Activated CD4-positive, alpha-beta T cell treated with anti-CD3 and anti-CD28 coated beads for 36 hours (primary cell): ENCODE measurements at regions of chr3 and their contacts with region 1.

Region 1: DNA sequence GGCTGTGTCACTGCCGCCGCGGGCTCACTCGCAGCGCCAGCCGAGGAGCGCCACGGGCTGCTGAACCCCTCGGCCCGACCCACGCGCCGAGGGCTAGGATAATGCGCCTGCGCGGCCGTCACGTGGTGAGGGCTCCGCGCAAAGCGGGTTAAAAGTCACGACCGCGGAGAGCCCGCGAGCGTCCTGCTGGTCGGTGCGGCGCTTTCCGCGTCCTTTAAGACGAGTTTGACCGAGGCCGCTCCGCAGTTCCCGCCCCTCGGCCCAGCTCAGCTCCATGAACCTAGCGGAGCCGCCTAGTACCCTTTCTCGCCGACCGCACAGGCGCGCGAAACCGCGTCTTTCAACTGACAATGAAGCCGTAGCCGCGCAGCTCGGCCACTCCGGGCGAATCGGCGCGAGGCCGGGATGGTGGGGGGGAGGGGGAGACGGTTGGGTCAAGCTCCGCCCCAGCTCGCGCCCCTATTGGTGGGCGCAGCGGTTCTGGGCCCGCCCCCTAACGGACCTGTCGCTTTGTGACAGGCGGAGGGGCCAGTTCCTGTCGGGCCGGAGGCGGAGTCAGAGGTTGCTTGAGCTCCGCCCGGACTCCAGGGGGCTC is 636 bp upstream of the STT3B start:
- DNase-seq: peak; percentile 99
- ATAC-seq: peak; percentile 88
- H3K4me3 Mint-ChIP-seq: no peak overlapping the region
- H3K27ac Mint-ChIP-seq: peak overlapping the region; percentile 99
- H3K4me1 Mint-ChIP-seq: peaks cover 12% of the 10 kb centered on the region
- H3K27me3 Mint-ChIP-seq: no peaks in the 10 kb centered on the region

Region 2: GRCh38 chr3:30606301-30607031 is 925.6 kb before region 1 on chr3 and contains the start of gene TGFBR2:
- CTCF ChIA-PET with region 1: no interaction called
- POLR2A ChIA-PET with region 1: no interaction called
- intact Hi-C with region 1: loop called in 1 of 2 experiments (anchors 2 kb)
- DNase-seq: peak; percentile 94
- ATAC-seq: peak; percentile 70
- H3K4me3 Mint-ChIP-seq: peak within 1 kb of the TSS; percentile 99
- H3K27ac Mint-ChIP-seq: peak within 1 kb of the TSS; percentile 95
- H3K4me1 Mint-ChIP-seq: peaks cover 60% of the 10 kb centered on the region
- H3K27me3 Mint-ChIP-seq: no peaks in the 10 kb centered on the region
- total RNA-seq, gene TGFBR2: 45.5 to 46.6 TPM

Region 3: GRCh38 chr3:31077021-31077601 is 455.0 kb before region 1 on chr3:
- CTCF ChIA-PET with region 1: no interaction called
- POLR2A ChIA-PET with region 1: interaction called, 7 read pairs
- intact Hi-C with region 1: loop called in 1 of 2 experiments (anchors 1 kb)
- DNase-seq: peak; percentile 68
- ATAC-seq: peak; percentile 98
- H3K4me3 Mint-ChIP-seq: no peak overlapping the region
- H3K27ac Mint-ChIP-seq: peak overlapping the region; percentile 52
- H3K4me1 Mint-ChIP-seq: peaks cover 26% of the 10 kb centered on the region
- H3K27me3 Mint-ChIP-seq: peaks cover 5% of the 10 kb centered on the region

Region 4: GRCh38 chr3:31253782-31254181 is 278.3 kb before region 1 on chr3:
- CTCF ChIA-PET with region 1: no interaction called
- POLR2A ChIA-PET with region 1: interaction called, 7 read pairs
- intact Hi-C with region 1: loop called (anchors 1 to 2 kb)
- DNase-seq: peak; percentile 65
- ATAC-seq: peak; percentile 45
- H3K4me3 Mint-ChIP-seq: peak overlapping the region; percentile 24
- H3K27ac Mint-ChIP-seq: peak overlapping the region; percentile 99
- H3K4me1 Mint-ChIP-seq: peaks cover 57% of the 10 kb centered on the region
- H3K27me3 Mint-ChIP-seq: peaks cover 4% of the 10 kb centered on the region

Region 5: DNA sequence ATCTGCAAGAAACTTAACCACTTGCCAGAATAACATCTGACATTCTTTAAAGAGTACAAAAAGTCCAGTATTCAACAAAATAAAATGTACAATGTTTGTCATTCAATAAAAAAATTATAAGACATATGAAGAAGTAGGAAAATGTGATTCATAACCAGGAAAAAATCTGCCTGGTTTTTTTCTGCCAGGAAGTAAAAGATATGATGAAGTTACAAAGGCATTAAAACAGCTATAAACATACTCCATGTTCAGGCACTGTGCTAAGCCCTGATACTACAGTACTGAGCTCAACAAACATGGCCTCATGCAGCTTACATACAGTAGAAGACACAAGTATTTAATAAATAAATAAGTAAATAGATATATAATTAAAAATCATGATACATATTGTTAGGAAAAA is 177.7 kb before region 1 on chr3:
- CTCF ChIA-PET with region 1: no interaction called
- POLR2A ChIA-PET with region 1: no interaction called
- intact Hi-C with region 1: no loop called
- DNase-seq: no peak
- ATAC-seq: no peak
- H3K4me3 Mint-ChIP-seq: no peak overlapping the region
- H3K27ac Mint-ChIP-seq: no peak overlapping the region
- H3K4me1 Mint-ChIP-seq: peaks cover 16% of the 10 kb centered on the region
- H3K27me3 Mint-ChIP-seq: no peaks in the 10 kb centered on the region

Region 6: GRCh38 chr3:31544634-31545033 is 12.5 kb after region 1 on chr3:
- CTCF ChIA-PET with region 1: interaction called, 19 read pairs
- POLR2A ChIA-PET with region 1: interaction called, 4 read pairs
- intact Hi-C with region 1: no loop called
- DNase-seq: no peak
- ATAC-seq: no peak
- H3K4me3 Mint-ChIP-seq: no peak overlapping the region
- H3K27ac Mint-ChIP-seq: no peak overlapping the region
- H3K4me1 Mint-ChIP-seq: peaks cover 83% of the 10 kb centered on the region
- H3K27me3 Mint-ChIP-seq: no peaks in the 10 kb centered on the region

Region 7: DNA sequence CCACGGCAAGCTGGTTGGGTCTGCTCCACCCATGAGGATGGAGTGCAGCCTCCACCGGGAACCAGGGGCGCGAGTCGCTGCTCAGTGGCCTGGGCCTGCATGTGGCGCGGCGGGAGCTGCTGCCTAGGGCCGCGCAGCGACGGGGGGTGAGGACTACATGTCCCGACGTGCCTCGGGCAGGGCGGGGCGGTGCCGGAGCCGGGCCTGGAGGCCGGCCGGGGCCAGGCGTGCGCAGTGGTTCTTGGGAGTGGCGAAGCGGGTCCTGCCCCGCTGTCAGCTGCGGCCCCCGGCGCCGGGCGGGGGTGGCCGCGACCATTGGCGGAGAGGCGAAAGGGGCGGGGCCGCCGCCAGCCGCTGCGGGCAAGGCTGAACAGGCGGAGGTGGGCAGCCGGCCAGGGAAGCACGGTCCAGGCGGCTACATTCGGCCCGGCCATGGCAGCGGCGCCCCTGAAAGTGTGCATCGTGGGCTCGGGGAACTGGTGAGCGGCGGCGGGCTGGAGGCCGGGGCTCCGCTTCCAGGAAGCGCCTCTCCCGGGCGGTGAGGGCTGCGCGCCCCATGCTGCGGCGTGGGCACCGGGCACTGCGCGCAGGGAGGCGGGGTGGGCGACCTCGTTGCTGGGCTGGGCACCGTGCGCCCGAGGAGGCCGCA is 574.3 kb after region 1 on chr3 and contains the start of gene GPD1L:
- CTCF ChIA-PET with region 1: no interaction called
- POLR2A ChIA-PET with region 1: no interaction called
- intact Hi-C with region 1: loop called (anchors 1 kb)
- DNase-seq: peak; percentile 96
- ATAC-seq: peak; percentile 99
- H3K4me3 Mint-ChIP-seq: peak within 1 kb of the TSS; percentile 92
- H3K27ac Mint-ChIP-seq: peak within 1 kb of the TSS; percentile 90
- H3K4me1 Mint-ChIP-seq: peaks cover 30% of the 10 kb centered on the region
- H3K27me3 Mint-ChIP-seq: no peaks in the 10 kb centered on the region
- total RNA-seq, gene GPD1L: 6.6 to 10.1 TPM